Activated CD4-positive, alpha-beta T cell treated with anti-CD3 and anti-CD28 coated beads for 36 hours (primary cell): ENCODE measurements at regions of chr4 and their contacts with region 1.

Region 1: DNA sequence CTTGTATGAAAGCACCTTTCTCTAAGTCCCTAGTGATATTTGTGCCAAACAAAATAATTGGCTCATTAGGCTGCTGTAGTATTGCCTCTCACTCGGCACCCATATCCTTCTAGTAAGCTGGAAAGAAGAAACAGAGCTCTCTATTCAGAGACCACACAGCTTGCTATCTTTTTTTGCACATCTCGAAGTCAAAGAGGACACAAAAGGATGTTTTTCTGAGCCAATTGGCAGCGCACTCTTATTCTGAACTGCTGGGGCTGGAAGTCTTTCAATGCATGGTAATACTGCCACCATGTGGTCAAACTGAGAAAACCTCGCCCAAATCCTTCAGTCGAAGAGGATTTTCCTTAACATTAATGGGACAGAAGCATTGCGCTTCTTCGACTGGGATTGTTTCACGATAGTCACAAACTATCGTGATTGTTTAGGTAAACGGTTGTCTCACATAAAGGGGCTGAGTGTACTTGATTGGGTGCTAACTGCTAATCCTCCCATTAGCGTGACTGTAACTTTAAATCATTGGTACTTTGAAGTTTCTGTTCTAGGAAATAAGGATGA is 572.0 kb upstream of the LCORL start:
- DNase-seq: peak; percentile 55
- ATAC-seq: peak; percentile 70
- H3K4me3 Mint-ChIP-seq: no peak overlapping the region
- H3K27ac Mint-ChIP-seq: no peak overlapping the region
- H3K4me1 Mint-ChIP-seq: no peaks in the 10 kb centered on the region
- H3K27me3 Mint-ChIP-seq: peaks cover 14% of the 10 kb centered on the region

Region 2: GRCh38 chr4:17241835-17242234 is 1351.7 kb before region 1 on chr4:
- CTCF ChIA-PET with region 1: no interaction called
- POLR2A ChIA-PET with region 1: no interaction called
- intact Hi-C with region 1: no loop called
- DNase-seq: no peak
- ATAC-seq: no peak
- H3K4me3 Mint-ChIP-seq: no peak overlapping the region
- H3K27ac Mint-ChIP-seq: no peak overlapping the region
- H3K4me1 Mint-ChIP-seq: no peaks in the 10 kb centered on the region
- H3K27me3 Mint-ChIP-seq: peaks cover 5% of the 10 kb centered on the region

Region 3: DNA sequence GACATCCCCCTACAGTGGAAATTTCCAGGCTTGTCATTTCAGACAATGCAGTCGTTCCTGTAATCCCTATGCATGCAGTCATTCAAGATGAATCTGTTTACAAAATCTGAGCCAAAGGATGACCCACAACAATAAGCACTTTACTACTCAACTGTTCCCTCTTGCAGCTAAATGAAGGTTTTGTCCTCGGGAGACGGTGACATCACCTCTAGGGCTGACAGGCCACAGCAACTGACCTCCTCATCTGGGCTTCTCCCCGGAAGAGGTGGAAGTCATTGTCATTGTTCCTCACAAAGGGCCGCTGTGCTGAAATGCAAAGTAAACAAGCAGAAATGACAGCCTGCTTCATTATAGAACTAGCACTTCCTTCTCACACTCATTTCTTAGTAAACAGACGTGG is 1049.3 kb before region 1 on chr4:
- CTCF ChIA-PET with region 1: interaction called, 3 read pairs
- POLR2A ChIA-PET with region 1: no interaction called
- intact Hi-C with region 1: loop called in 1 of 2 experiments (anchors 1 kb)
- DNase-seq: no peak
- ATAC-seq: no peak
- H3K4me3 Mint-ChIP-seq: no peak overlapping the region
- H3K27ac Mint-ChIP-seq: no peak overlapping the region
- H3K4me1 Mint-ChIP-seq: no peaks in the 10 kb centered on the region
- H3K27me3 Mint-ChIP-seq: peaks cover 15% of the 10 kb centered on the region

Region 4: GRCh38 chr4:17636696-17637622 is 956.6 kb before region 1 on chr4:
- CTCF ChIA-PET with region 1: no interaction called
- POLR2A ChIA-PET with region 1: no interaction called
- intact Hi-C with region 1: loop called in 1 of 2 experiments (anchors 5 kb)
- DNase-seq: peak; percentile 87
- ATAC-seq: peak; percentile 95
- H3K4me3 Mint-ChIP-seq: no peak overlapping the region
- H3K27ac Mint-ChIP-seq: no peak overlapping the region
- H3K4me1 Mint-ChIP-seq: no peaks in the 10 kb centered on the region
- H3K27me3 Mint-ChIP-seq: no peaks in the 10 kb centered on the region

Region 5: DNA sequence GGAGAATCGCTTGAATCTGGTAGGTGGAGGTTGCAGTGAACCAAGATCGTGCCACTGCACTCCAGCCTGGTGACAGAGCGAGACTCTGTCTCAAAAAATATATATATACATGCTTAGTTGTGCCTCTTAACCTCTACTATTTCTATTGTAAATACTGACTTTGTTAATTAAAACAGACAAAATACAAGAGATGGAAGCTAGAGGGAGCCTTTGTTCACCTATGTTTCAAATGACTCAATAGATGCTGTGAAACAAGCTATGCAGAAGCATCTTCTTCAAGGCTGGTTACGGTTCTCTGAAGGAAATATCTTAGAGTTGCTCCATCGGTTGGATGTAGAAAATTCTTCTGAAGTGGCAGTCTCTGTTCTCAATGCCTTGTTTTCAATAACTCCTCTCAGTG is 776.5 kb before region 1 on chr4:
- CTCF ChIA-PET with region 1: interaction called, 5 read pairs
- POLR2A ChIA-PET with region 1: no interaction called
- intact Hi-C with region 1: loop called (anchors 1 kb)
- DNase-seq: no peak
- ATAC-seq: peak; percentile 84
- H3K4me3 Mint-ChIP-seq: no peak overlapping the region
- H3K27ac Mint-ChIP-seq: no peak overlapping the region
- H3K4me1 Mint-ChIP-seq: peaks cover 12% of the 10 kb centered on the region
- H3K27me3 Mint-ChIP-seq: no peaks in the 10 kb centered on the region

Region 6: DNA sequence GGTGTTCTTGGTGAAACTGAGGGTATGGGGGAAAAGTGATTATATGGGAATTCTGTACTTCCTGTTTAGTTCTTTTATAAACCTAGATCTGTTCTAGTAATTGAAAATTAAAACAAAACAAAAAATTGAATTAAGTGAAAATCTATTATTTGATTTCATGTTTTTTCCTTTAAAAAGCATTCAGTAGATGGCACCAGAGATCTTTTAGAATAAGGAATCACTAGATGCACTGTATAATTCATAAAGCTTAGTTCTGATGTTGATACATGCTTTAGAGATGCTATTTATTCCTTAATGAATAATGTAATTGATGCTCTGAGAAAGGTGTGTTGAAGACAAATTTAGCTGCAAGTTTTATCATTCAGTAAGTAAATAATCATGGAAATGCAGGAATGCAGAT is 659.2 kb before region 1 on chr4:
- CTCF ChIA-PET with region 1: no interaction called
- POLR2A ChIA-PET with region 1: no interaction called
- intact Hi-C with region 1: loop called in 1 of 2 experiments (anchors 1 kb)
- DNase-seq: no peak
- ATAC-seq: no peak
- H3K4me3 Mint-ChIP-seq: no peak overlapping the region
- H3K27ac Mint-ChIP-seq: no peak overlapping the region
- H3K4me1 Mint-ChIP-seq: no peaks in the 10 kb centered on the region
- H3K27me3 Mint-ChIP-seq: no peaks in the 10 kb centered on the region

Region 7: GRCh38 chr4:18075823-18076433 is 517.6 kb before region 1 on chr4:
- CTCF ChIA-PET with region 1: no interaction called
- POLR2A ChIA-PET with region 1: no interaction called
- intact Hi-C with region 1: loop called in 1 of 2 experiments (anchors 10 kb)
- DNase-seq: peak; percentile 66
- ATAC-seq: peak; percentile 76
- H3K4me3 Mint-ChIP-seq: no peak overlapping the region
- H3K27ac Mint-ChIP-seq: no peak overlapping the region
- H3K4me1 Mint-ChIP-seq: peaks cover 5% of the 10 kb centered on the region
- H3K27me3 Mint-ChIP-seq: peaks cover 26% of the 10 kb centered on the region

Region 8: DNA sequence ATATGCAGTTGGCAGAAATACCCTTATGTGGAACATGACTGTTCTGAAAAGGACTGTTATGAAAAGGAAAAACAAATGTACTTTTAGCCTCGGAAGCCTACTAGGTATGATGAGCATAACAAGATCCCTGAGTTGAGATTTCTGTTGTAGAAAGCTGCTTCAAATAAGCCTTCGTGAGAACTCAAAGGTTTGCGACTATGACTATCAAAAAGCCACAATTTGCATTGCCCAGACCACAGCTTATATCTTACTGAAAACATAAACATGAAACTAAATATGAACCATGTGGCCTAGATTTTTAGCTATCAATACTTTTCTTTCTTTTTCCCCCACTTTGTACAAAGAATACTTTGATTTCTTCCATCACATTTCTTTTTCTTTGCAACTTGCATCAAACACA is 173.7 kb before region 1 on chr4:
- CTCF ChIA-PET with region 1: no interaction called
- POLR2A ChIA-PET with region 1: no interaction called
- intact Hi-C with region 1: loop called in 1 of 2 experiments (anchors 5 kb)
- DNase-seq: no peak
- ATAC-seq: no peak
- H3K4me3 Mint-ChIP-seq: no peak overlapping the region
- H3K27ac Mint-ChIP-seq: no peak overlapping the region
- H3K4me1 Mint-ChIP-seq: no peaks in the 10 kb centered on the region
- H3K27me3 Mint-ChIP-seq: peaks cover 3% of the 10 kb centered on the region

Region 9: DNA sequence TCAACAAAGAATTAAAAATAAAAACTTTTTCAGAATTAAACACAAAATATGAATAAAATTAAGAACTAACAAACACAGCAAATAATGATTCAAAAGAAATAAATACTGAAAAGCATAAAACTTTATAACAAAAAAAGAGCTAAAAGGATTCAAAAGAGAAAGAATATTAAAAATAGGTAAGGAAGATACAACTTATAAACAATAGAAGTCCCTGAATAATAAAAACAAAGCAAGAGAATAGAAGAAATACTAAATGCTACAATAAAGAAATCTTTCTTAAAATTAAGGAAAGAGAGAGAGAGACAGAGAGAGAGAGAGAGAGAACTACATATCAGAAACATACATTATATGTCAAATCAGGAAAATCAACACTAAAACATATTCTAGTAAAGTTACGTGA is 1038.3 kb after region 1 on chr4:
- CTCF ChIA-PET with region 1: no interaction called
- POLR2A ChIA-PET with region 1: no interaction called
- intact Hi-C with region 1: no loop called
- DNase-seq: no peak
- ATAC-seq: no peak
- H3K4me3 Mint-ChIP-seq: no peak overlapping the region
- H3K27ac Mint-ChIP-seq: no peak overlapping the region
- H3K4me1 Mint-ChIP-seq: no peaks in the 10 kb centered on the region
- H3K27me3 Mint-ChIP-seq: no peaks in the 10 kb centered on the region